ENCODE measurements at regions of chr1 and their contacts with region 1.

Region 1: GRCh38 chr1:85576642-85577418 is 3.7 kb upstream of the CCN1 start:
- DNase-seq: peak; percentile 93 to 97
- ATAC-seq: peak; percentile 83
- H3K4me3 ChIP-seq: peak overlapping the region; percentile 64 to 78
- H3K27ac ChIP-seq: peak overlapping the region; percentile 70 to 99
- H3K4me1 ChIP-seq: no peaks in the 10 kb centered on the region
- H3K27me3 ChIP-seq: no peaks in the 10 kb centered on the region

Region 2: DNA sequence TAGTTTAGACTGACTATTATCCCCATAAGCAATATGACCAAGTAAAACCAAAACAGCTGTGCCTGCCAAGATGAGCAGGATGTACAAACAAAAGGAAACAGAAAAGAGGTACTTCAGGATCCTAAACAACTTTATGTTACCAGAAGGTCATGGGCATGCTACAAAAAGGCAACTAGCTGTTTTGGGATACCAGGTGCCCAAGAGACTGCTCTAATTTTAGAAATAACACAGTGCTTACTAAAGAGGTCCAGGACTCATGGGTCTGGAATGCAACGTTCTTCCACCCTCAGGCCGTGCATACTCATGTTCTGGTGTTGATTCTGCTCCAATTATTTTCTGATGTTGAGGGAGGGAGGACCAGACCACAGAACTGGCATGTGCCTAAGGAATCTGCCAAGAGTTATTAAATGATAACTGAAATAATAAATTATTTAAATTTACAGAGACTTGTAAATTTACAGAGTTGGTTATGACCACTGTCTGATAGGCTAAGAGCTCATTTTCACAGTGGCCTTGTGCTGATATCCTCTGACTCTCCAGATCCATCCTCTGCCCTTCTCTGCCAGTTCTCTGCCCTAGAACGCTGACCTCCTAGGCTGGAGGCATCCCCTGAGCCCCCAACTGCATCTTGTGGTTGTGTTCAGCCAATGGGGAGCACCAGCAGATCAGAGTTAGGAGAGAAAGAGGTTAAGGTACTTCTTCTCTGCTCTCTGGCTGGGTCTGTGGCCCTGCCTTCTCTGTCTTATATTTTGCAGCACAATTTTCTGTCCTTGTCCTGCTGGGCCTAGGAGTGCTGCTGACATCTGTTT is 262.7 kb before region 1 on chr1:
- intact Hi-C with region 1: loop called (anchors 2 to 5 kb)
- DNase-seq: peak in 1 of 2 donors; percentile 56
- ATAC-seq: peak; percentile 85
- H3K4me3 ChIP-seq: no peak overlapping the region
- H3K27ac ChIP-seq: peak overlapping the region; percentile 36 to 83
- H3K4me1 ChIP-seq: peaks cover 6 to 9% of the 10 kb centered on the region in 2 donors
- H3K27me3 ChIP-seq: no peaks in the 10 kb centered on the region

Region 3: GRCh38 chr1:85628791-85629531 is 52.1 kb after region 1 on chr1:
- intact Hi-C with region 1: loop called in 1 of 2 experiments (anchors 2 kb)
- DNase-seq: peak; percentile 83
- ATAC-seq: peak; percentile 82
- H3K4me3 ChIP-seq: no peak overlapping the region
- H3K27ac ChIP-seq: peak overlapping the region; percentile 87 to 99
- H3K4me1 ChIP-seq: peaks cover 0 to 10% of the 10 kb centered on the region in 2 donors
- H3K27me3 ChIP-seq: no peaks in the 10 kb centered on the region

Region 4: GRCh38 chr1:85681087-85681486 is 104.3 kb after region 1 on chr1:
- intact Hi-C with region 1: no loop called
- DNase-seq: no peak
- ATAC-seq: no peak
- H3K4me3 ChIP-seq: no peak overlapping the region
- H3K27ac ChIP-seq: no peak overlapping the region
- H3K4me1 ChIP-seq: peaks cover 0 to 3% of the 10 kb centered on the region in 2 donors
- H3K27me3 ChIP-seq: no peaks in the 10 kb centered on the region

Region 5: DNA sequence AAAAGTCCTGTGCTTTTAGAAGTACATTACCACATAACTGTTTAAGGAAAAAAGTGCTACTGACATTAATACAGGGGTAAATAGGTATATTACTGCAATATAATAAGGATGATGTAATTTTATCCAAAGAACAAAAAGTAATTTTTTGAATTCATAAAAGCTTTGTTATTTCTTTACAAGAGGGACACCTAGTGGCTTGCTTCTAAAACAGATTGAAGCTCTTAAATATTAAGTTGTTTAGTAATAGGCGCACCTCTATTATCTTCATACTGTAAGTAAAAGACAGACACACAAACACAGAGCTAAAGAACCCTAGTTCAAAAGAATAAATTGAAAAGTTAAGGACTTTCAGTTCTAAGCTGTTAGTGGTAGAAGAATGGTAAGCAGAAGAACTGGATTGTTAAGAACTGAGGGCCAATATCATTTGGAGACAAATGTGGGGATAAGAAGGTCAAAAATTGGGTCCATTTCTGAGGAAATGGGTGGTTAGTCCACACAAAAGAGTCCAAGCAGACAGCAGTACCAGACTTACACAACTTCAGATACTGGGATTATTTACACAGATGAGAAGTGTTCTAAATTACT is 116.0 kb after region 1 on chr1:
- intact Hi-C with region 1: no loop called
- DNase-seq: no peak
- ATAC-seq: no peak
- H3K4me3 ChIP-seq: no peak overlapping the region
- H3K27ac ChIP-seq: no peak overlapping the region
- H3K4me1 ChIP-seq: no peaks in the 10 kb centered on the region
- H3K27me3 ChIP-seq: no peaks in the 10 kb centered on the region